IMR-90 (cell line): ENCODE measurements at regions of chr2 and their contacts with region 1.

Region 1: GRCh38 chr2:88739985-88740600 is 48.6 kb downstream of the RPIA start:
- DNase-seq: peak; percentile 72
- ATAC-seq: peak; percentile 99
- H3K4me3 ChIP-seq: no peak overlapping the region
- H3K27ac ChIP-seq: no peak overlapping the region
- H3K4me1 ChIP-seq: no peaks in the 10 kb centered on the region; the same call in 1 of the 2 replicates
- H3K27me3 ChIP-seq: no peaks in the 10 kb centered on the region
- CTCF ChIP-seq: peak; percentile 87
- POLR2A ChIP-seq: no peak
- RAD21 ChIP-seq: peak; percentile 74

Region 2: GRCh38 chr2:88874063-88874657 is 134.1 kb after region 1 on chr2:
- CTCF ChIA-PET with region 1: interaction called, 7 read pairs
- POLR2A ChIA-PET with region 1: no interaction called
- dilution Hi-C with region 1: no loop called
- in situ Hi-C with region 1: no loop called
- intact Hi-C with region 1: loop called (anchors 1 kb)
- DNase-seq: peak; percentile 63
- ATAC-seq: peak; percentile 93
- H3K4me3 ChIP-seq: no peak overlapping the region
- H3K27ac ChIP-seq: no peak overlapping the region
- H3K4me1 ChIP-seq: no peaks in the 10 kb centered on the region
- H3K27me3 ChIP-seq: peaks cover 2% of the 10 kb centered on the region
- CTCF ChIP-seq: peak; percentile 79
- POLR2A ChIP-seq: no peak
- RAD21 ChIP-seq: peak; percentile 71

Region 3: DNA sequence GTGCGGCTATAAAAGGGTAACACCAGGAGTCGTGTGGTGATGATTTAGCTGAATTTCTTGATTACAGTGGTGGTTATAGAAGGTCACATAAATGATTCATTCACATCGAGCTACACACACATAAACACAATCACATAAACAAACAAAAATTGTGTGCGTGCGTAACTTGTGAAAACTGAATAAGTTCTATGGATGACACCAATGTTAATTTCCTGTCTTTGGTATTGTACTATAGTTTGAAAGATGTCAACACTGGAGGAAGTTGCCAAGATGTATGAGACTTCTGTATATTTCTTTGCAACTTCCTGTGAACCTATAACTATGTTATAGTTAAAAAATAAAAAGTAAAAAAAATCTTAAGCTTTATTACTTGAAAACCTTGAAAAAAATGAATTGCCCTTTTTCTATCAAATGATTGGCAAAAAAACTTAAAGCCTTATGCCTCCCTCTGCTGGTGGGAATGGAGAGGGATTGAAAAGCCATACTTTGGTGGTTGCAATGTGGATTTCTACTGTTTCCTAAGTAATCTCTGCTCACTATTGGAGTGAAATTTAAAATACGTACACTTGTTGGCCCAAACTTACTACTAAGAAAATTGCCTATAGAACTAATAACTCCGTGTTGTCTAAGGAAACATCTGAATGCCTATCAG is 179.1 kb after region 1 on chr2:
- CTCF ChIA-PET with region 1: no interaction called
- POLR2A ChIA-PET with region 1: no interaction called
- dilution Hi-C with region 1: no loop called
- in situ Hi-C with region 1: no loop called
- intact Hi-C with region 1: loop called (anchors 1 kb)
- DNase-seq: peak; percentile 34
- ATAC-seq: peak; percentile 53; the same call in 1 of the 2 replicates
- H3K4me3 ChIP-seq: no peak overlapping the region
- H3K27ac ChIP-seq: no peak overlapping the region
- H3K4me1 ChIP-seq: no peaks in the 10 kb centered on the region
- H3K27me3 ChIP-seq: no peaks in the 10 kb centered on the region
- CTCF ChIP-seq: peak; percentile 69
- POLR2A ChIP-seq: no peak
- RAD21 ChIP-seq: peak; percentile 36